PC-3 (cell line): ENCODE measurements at regions of chr14 and their contacts with region 1.

Region 1: DNA sequence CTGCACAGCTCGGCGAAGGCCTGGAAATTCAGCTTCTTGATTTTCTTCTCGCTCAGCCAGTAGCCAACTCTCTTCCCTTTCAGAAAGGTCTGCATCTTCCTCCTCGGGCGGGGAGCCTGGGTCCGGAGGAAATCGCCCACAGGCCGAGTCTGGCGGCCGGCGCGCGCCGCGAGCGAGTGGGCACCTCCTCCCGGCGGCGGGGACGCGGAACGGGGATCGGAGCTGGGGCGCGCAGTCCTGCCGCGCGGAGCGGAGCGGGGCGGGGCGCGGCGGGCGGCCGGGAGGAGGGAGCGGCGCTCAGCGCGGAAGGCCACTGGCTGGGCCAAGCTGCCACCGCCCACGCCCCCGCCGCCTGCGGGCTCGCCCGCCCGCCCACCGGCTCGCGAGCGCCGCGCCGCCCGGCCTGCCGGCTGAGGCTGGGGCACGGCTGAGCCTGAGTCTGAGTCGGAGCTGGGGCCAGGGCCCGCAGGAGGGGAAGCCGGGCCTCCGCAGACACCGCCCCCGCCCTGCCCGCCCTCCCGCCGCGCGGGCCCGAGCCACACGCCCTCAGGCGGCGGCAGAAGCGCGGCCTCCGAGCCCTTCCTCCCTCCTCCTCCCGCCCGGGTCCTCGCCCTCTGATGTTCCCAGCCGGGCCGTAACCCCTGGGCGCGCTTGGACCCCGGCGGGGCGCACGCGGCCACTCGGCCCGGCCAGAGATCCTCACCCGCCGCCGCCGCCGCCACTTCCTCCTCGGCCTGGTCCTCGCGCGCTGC is 480 bp downstream of the ITPK1 start:
- DNase-seq: peak; percentile 87
- ATAC-seq: peak; percentile 84
- H3K4me3 ChIP-seq: peak overlapping the region; percentile 94
- H3K27ac ChIP-seq: no peak overlapping the region
- H3K4me1 ChIP-seq: peaks cover 21% of the 10 kb centered on the region
- H3K27me3 ChIP-seq: no peaks in the 10 kb centered on the region
- CTCF ChIP-seq: no peak

Region 2: DNA sequence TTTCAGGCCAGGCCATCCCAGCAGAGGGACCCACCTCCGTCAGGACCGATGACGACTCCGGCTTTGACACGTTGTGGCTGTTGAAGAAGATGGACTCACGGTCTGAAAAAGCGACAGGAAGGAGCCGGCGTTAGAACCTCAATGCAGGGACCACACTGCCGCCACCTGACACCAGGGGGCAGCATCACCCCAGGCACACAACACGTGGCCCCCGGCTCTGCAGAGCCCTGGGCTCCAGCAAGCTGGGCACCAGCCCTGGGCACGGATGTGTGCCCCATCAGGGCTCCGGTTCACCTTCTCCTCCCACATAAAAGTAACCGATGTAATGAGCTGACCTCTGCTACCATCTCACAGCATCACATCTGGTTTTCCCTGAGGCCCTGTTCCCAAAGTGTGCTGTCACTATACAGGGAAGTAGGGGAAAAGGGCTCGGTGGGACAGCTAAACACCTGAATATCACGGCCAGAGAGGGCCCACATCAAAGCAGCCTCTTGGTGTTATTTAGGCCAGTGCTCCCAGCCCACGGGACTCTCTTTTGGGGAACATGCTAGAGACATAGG is 163.3 kb before region 1 on chr14:
- CTCF ChIA-PET with region 1: interaction called, 15 read pairs
- POLR2A ChIA-PET with region 1: no interaction called
- intact Hi-C with region 1: loop called (anchors 1 kb)
- DNase-seq: peak; percentile 68
- ATAC-seq: peak; percentile 96
- H3K4me3 ChIP-seq: no peak overlapping the region
- H3K27ac ChIP-seq: no peak overlapping the region
- H3K4me1 ChIP-seq: no peaks in the 10 kb centered on the region
- H3K27me3 ChIP-seq: no peaks in the 10 kb centered on the region
- CTCF ChIP-seq: peak; percentile 94

Region 3: DNA sequence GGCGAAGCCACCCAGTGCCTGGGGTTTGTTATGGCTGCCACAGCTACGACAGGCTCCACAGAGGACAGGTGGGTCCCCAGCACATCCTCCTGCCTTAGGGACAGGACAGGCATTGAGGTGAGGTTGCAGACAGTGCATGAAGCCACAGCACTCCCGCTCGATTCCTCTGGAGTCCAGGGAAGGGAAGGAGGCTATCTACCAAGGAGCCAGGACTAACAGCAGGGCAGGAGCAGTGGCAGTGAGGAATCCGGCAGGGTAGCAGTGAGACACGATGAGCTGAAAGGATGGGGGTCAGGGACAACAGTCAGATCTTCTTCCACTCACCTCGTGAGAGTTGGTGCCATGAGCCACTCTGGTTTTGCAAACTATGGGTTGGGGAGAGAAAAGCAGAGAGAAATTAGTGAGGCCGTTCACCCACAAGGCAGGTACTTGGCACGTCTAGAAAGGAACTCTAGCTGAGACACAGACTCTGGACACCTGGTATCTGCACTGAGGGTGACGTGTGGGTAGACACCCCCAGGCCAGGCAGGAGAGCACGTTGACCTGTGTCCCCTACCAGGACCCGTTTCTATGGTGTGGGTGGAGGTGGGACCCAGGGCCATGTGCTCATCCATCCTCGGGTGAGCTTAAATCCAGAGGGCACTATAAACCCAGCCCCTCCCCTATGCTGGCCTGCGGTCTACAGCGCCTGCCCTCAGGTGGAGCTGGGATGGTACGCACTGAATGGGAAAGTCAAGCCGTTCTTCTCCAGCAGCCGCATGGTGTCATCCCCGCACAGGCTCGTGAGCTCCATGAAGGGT is 153.0 kb before region 1 on chr14:
- CTCF ChIA-PET with region 1: no interaction called
- POLR2A ChIA-PET with region 1: no interaction called
- intact Hi-C with region 1: no loop called
- DNase-seq: no peak
- ATAC-seq: no peak
- H3K4me3 ChIP-seq: no peak overlapping the region
- H3K27ac ChIP-seq: no peak overlapping the region
- H3K4me1 ChIP-seq: peaks cover 22% of the 10 kb centered on the region
- H3K27me3 ChIP-seq: no peaks in the 10 kb centered on the region
- CTCF ChIP-seq: no peak

Region 4: GRCh38 chr14:93132470-93133065 is 17.3 kb after region 1 on chr14:
- CTCF ChIA-PET with region 1: interaction called, 15 read pairs
- POLR2A ChIA-PET with region 1: interaction called, 6 read pairs
- intact Hi-C with region 1: no loop called
- DNase-seq: peak; percentile 43
- ATAC-seq: peak; percentile 76
- H3K4me3 ChIP-seq: no peak overlapping the region
- H3K27ac ChIP-seq: no peak overlapping the region
- H3K4me1 ChIP-seq: no peaks in the 10 kb centered on the region
- H3K27me3 ChIP-seq: no peaks in the 10 kb centered on the region
- CTCF ChIP-seq: peak; percentile 55

Region 5: DNA sequence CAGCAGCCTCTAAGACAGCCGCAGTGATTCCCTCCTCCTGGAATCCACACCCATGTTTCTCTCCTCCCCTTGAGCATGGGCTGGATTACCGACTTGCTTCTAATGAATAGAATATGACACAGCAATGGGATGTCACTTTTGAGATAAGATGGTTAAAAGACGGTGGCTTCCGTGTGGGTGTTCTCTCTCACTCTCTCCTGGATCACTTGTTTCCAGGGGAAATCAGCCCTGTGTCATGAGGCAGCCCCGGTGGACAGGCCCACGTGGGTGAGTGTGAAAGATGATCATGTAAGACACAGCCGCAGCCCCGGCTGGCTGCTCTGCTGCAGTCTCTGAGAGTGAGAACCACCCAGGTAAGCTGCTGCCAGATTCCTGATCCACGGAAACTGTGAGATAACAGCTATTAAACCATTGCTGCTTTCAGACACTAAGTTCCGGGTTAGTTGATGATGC is 58.7 kb after region 1 on chr14:
- CTCF ChIA-PET with region 1: interaction called, 3 read pairs
- POLR2A ChIA-PET with region 1: no interaction called
- intact Hi-C with region 1: loop called (anchors 10 kb)
- DNase-seq: peak; percentile 20
- ATAC-seq: peak; percentile 42
- H3K4me3 ChIP-seq: no peak overlapping the region
- H3K27ac ChIP-seq: no peak overlapping the region
- H3K4me1 ChIP-seq: peaks cover 4% of the 10 kb centered on the region; the same call in 1 of the 2 replicates
- H3K27me3 ChIP-seq: no peaks in the 10 kb centered on the region
- CTCF ChIP-seq: no peak

Region 6: GRCh38 chr14:93619176-93619793 is 504.0 kb after region 1 on chr14:
- CTCF ChIA-PET with region 1: no interaction called
- POLR2A ChIA-PET with region 1: no interaction called
- intact Hi-C with region 1: loop called (anchors 2 kb)
- DNase-seq: peak; percentile 68
- ATAC-seq: peak; percentile 65; the same call in 1 of the 2 replicates
- H3K4me3 ChIP-seq: no peak overlapping the region
- H3K27ac ChIP-seq: no peak overlapping the region
- H3K4me1 ChIP-seq: no peaks in the 10 kb centered on the region
- H3K27me3 ChIP-seq: peaks cover 57% of the 10 kb centered on the region
- CTCF ChIP-seq: peak; percentile 82